PC-9 (cell line): ENCODE measurements at regions of chr19 and their contacts with region 1.

Region 1: GRCh38 chr19:1275260-1275975 is at the start of gene FAM174C:
- DNase-seq: peak; percentile 84 to 87
- H3K4me3 ChIP-seq: peak within 1 kb of the TSS; percentile 78
- H3K27ac ChIP-seq: peak within 1 kb of the TSS; percentile 86
- H3K4me1 ChIP-seq: peaks cover 27% of the 10 kb centered on the region
- H3K27me3 ChIP-seq: no peaks in the 10 kb centered on the region
- CTCF ChIP-seq: no peak
- total RNA-seq, gene FAM174C: 51.8 and 64.2 TPM in 2 replicates

Region 2: DNA sequence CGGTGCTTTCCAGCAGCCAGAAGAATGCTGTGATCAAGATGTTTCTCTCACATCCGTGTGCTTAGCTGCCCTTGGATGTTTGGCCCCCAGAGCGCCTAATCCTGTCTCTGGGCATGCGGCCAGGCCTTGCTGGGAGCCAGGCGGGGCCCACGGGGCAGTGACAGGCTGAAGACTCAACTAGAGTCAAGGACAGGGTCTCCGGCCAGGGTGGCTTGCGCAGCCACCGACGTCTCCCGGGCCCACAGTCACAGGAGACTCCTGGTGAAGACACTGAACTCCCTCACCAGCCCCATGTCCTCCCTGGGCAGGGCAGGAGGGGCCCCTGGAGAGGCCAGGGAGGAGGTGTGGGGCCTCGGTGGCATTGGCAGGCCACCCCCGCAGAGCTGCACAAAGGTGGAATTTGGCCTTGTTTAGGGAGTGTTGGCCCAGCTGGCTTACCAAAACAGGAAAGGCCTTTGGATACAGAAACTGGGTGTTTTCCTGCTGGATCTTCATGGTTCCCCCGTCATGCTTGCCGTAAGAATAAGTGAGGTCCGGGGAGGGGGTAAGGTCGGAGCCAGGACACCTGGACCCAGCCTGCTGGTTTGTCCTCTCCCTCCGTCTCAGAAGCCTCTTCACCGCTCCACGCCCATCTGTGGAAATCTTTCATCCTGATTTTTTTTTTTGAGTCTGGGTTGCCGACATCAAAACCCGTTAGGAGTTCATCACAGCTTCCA is 98.3 kb after region 1 on chr19:
- CTCF ChIA-PET with region 1: no interaction called
- POLR2A ChIA-PET with region 1: interaction called, 3 read pairs
- intact Hi-C with region 1: loop called (anchors 2 kb)
- DNase-seq: no peak
- H3K4me3 ChIP-seq: no peak overlapping the region
- H3K27ac ChIP-seq: no peak overlapping the region
- H3K4me1 ChIP-seq: no peaks in the 10 kb centered on the region
- H3K27me3 ChIP-seq: no peaks in the 10 kb centered on the region
- CTCF ChIP-seq: no peak